ENCODE measurements at regions of chr6 and their contacts with region 1.

Region 1: GRCh38 chr6:63573140-63573898 is 1.0 kb downstream of the LOC128125822 start:
- DNase-seq: peak; percentile 76 to 86
- H3K4me3 ChIP-seq: peak overlapping the region; percentile 81 to 85 (median 82)
- H3K27ac ChIP-seq: peak overlapping the region; percentile 98
- H3K4me1 ChIP-seq: peaks cover 0 to 3% (median 0%) of the 10 kb centered on the region in 4 experiments; a peak in 1 of 7 replicates
- H3K27me3 ChIP-seq: 0 out of 7 replicates have a peak, but pooled peaks cover 0 to 2% (median under 1%) of the 10 kb centered on the region in 4 experiments
- CTCF ChIP-seq: no peak
- EP300 ChIP-seq: no peak
- POLR2A ChIP-seq: peak; percentile 93 to 98
- RAD21 ChIP-seq: no peak

Region 2: GRCh38 chr6:63516186-63516944 is 57.0 kb before region 1 on chr6:
- CTCF ChIA-PET with region 1: no interaction called
- POLR2A ChIA-PET with region 1: no interaction called
- DNase-seq: no peak
- H3K4me3 ChIP-seq: no peak overlapping the region
- H3K27ac ChIP-seq: no peak overlapping the region
- H3K4me1 ChIP-seq: no peaks in the 10 kb centered on the region
- H3K27me3 ChIP-seq: no peaks in the 10 kb centered on the region
- CTCF ChIP-seq: no peak
- EP300 ChIP-seq: no peak
- POLR2A ChIP-seq: no peak
- RAD21 ChIP-seq: no peak

Region 3: DNA sequence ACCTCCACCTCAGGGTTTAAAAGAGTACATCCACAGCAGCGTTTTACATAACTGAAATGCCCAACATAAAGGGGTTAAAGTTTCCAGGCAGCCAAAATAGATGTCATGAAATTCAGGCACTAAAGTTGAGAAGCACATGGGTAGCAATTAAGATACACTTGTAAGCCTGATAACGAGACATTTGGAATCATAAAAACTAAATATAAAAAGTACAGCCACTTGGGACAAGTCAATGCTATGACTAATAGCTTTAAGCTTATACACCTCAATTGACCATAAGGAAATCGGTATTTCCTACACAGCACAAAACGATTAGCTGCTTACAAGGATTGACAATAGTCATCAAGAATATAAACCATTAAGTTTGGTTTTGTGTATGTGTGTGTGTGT is 10.8 kb after region 1 on chr6:
- CTCF ChIA-PET with region 1: interaction called, 5 read pairs
- POLR2A ChIA-PET with region 1: interaction called, 33 read pairs
- DNase-seq: no peak
- H3K4me3 ChIP-seq: no peak overlapping the region
- H3K27ac ChIP-seq: no peak overlapping the region
- H3K4me1 ChIP-seq: no peaks in the 10 kb centered on the region
- H3K27me3 ChIP-seq: no peaks in the 10 kb centered on the region
- CTCF ChIP-seq: no peak
- EP300 ChIP-seq: no peak
- POLR2A ChIP-seq: peak in 1 of 2 experiments; percentile 46; a peak in 1 of 3 replicates
- RAD21 ChIP-seq: no peak